ENCODE measurements at regions of chr19 and their contacts with region 1.

Region 1: DNA sequence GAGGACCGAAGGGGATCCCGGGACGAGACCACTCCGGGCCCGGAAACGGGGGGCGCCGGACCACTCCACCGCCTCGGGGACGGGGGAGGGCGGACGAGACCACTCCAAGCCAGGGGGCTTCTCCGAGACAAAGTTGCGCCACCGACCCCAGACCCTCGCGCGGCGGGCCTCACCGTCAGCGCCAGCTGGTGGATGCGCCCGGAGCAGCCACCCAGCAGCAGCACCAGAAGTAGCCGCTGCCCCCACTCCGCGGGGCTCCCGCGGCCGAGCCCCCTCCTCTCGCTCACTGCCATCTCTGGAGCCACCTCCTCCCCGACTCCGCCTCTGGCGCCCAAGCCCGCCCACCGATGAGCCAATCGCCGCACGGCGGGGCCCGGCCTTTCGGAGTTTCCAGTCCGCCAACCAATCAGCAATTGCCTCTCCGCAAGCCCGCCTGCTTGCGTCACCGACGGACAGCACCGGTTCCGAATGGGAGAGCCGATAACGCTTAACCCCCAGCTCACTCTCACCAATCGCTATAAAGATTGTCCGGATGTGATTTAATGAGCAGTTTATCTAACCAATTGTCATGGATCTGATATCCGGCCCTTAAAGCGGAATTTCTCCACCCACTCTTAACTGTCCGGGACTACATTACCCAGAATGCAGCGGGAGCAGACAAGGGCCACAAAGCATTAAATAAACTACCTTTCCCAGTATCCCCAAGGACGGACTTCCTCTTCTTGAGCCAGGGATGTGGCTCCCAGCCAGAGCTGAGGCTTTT is at the start of gene GPR108:
- DNase-seq: peak; percentile 99 to 100 (median 99)
- H3K4me3 ChIP-seq: peak within 1 kb of the TSS; percentile 80
- H3K4me3 Mint-ChIP-seq: peak within 1 kb of the TSS; percentile 92 to 99 (median 96)
- H3K27ac ChIP-seq: peak within 1 kb of the TSS; percentile 77
- H3K27ac Mint-ChIP-seq: peak within 1 kb of the TSS; percentile 95 to 100 (median 98)
- H3K4me1 ChIP-seq: peaks cover 47% of the 10 kb centered on the region
- H3K4me1 Mint-ChIP-seq: peaks cover 32 to 53% (median 36%) of the 10 kb centered on the region in 3 donors
- H3K27me3 ChIP-seq: no peaks in the 10 kb centered on the region
- H3K27me3 Mint-ChIP-seq: no peaks in the 10 kb centered on the region
- total RNA-seq, gene GPR108: 72.0 to 74.0 TPM

Region 2: DNA sequence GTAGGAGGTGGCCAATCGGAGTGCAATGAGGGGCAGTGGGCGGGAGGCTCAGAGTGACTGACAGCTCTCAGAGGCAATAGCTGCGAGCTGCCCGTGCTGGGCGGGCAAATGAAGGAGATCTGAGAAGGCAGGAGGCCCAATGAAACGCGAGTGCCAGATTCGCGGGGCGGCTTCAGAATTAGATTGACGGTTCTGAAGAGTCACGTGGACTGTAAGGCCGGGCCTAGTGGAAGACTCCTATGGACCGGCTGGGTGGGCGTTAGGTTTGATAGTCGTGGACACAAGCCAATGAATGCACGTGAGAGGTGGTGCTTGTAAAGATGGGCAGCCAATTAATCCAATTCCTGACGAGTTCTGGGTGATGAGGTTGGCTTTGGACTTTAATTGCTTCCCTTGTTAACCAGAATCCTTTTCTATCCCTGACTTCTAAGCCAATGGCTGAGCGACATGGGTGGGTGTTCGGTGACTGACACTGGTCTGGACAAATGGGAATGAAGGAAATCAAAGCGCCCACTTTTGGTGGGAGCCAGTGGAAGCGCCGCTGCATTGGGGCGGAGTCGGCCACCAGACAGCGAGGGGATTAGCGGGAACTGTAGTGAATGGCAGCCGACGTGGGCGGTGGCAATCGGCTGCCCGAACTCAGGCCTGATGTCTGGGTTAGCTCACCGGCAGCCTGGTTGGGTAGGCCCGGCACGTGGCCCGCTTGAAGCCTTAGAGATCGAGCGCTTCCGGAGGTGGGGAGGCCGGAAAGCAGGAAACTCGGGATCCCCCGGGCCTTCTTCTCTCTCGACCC is 312.3 kb before region 1 on chr19:
- CTCF ChIA-PET with region 1: no interaction called
- POLR2A ChIA-PET with region 1: interaction called, 11 read pairs
- DNase-seq: peak; percentile 97 to 100 (median 99)
- H3K4me3 ChIP-seq: peak overlapping the region; percentile 26
- H3K4me3 Mint-ChIP-seq: peak overlapping the region; percentile 73 to 95 (median 82)
- H3K27ac ChIP-seq: peak overlapping the region; percentile 53
- H3K27ac Mint-ChIP-seq: peak overlapping the region; percentile 74 to 98 (median 90)
- H3K4me1 ChIP-seq: peaks cover 27% of the 10 kb centered on the region
- H3K4me1 Mint-ChIP-seq: peaks cover 30 to 46% (median 33%) of the 10 kb centered on the region in 3 donors
- H3K27me3 ChIP-seq: no peaks in the 10 kb centered on the region
- H3K27me3 Mint-ChIP-seq: peaks cover 0 to 1% of the 10 kb centered on the region in 2 donors

Region 3: DNA sequence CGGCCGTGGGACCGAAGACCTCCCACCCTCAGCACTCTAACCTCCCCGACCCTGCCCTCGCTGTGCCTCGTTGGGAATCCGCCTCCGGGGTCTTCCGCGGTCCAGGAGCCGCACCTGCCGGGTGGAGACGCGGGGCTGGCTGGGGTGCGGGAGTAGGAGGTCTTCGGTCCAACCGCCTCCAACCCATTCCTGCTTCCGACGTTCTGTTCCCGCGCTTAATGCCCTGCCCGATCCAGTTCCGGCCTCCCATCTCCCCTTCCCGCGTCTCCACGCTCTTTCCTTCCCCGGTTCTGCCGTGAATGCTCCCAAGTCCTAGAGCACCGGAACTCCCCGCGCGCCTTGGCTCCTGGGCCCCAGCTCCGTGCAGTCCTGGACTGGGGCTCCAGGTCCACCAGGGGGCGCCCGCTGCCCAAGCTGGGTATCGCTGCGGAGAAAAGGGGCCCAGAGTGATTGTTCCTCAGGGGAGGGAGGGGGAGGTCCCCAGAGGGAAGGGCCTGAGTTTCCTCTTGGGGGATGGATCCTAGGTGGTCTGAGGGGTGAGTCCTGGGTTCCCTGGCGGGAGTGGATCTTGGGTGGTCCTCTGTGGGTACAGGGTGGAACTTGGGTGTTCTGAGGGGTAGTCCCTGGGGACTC is 220.7 kb before region 1 on chr19:
- CTCF ChIA-PET with region 1: interaction called, 12 read pairs
- POLR2A ChIA-PET with region 1: no interaction called
- DNase-seq: peak; percentile 81 to 93 (median 88)
- H3K4me3 ChIP-seq: peak overlapping the region; percentile 84
- H3K4me3 Mint-ChIP-seq: peak overlapping the region; percentile 92 to 98 (median 94)
- H3K27ac ChIP-seq: peak overlapping the region; percentile 70
- H3K27ac Mint-ChIP-seq: peak overlapping the region; percentile 13 to 96 (median 92)
- H3K4me1 ChIP-seq: peaks cover 16% of the 10 kb centered on the region
- H3K4me1 Mint-ChIP-seq: peaks cover 32 to 38% (median 33%) of the 10 kb centered on the region in 3 donors
- H3K27me3 ChIP-seq: no peaks in the 10 kb centered on the region
- H3K27me3 Mint-ChIP-seq: no peaks in the 10 kb centered on the region

Region 4: DNA sequence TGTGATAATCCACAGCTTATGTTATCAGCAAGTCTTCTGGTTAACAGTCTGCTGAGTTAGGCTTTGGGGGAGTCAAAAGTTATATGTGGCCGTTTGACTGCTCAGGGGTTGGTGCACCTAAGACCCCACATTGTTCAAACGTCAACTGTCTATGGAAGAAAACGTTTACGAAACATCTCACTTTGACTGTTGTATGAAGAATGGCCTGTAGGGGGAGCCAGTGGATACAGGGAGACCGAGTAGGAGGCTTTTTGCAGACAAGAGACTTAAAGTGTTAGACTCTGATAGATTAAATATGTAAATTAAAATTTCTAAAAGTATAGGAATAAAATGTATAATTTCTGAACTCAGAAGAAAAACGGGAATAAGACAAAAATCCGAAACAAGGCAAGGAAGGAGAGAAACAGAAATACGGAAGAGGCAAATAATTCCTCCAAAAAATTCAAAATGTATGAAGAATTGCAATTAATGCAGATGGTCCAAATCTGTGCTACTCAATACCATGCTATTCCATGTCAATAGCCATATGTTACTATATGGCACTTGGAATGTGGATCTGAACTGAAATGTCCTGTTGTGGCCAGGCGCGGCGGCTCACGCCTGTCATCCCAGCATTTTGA is 105.4 kb before region 1 on chr19:
- CTCF ChIA-PET with region 1: interaction called, 23 read pairs
- POLR2A ChIA-PET with region 1: no interaction called
- DNase-seq: peak; percentile 71 to 85 (median 77)
- H3K4me3 ChIP-seq: no peak overlapping the region
- H3K4me3 Mint-ChIP-seq: peak overlapping the region in 1 of 7 donors; percentile 3
- H3K27ac ChIP-seq: no peak overlapping the region
- H3K27ac Mint-ChIP-seq: peak overlapping the region in 4 of 8 donors; percentile 47 to 76 (median 71)
- H3K4me1 ChIP-seq: no peaks in the 10 kb centered on the region
- H3K4me1 Mint-ChIP-seq: peaks cover 14 to 17% (median 15%) of the 10 kb centered on the region in 3 donors
- H3K27me3 ChIP-seq: no peaks in the 10 kb centered on the region
- H3K27me3 Mint-ChIP-seq: peaks cover 4 to 5% of the 10 kb centered on the region in 2 donors

Region 5: GRCh38 chr19:6761053-6761676 is 23.7 kb after region 1 on chr19:
- CTCF ChIA-PET with region 1: no interaction called
- POLR2A ChIA-PET with region 1: no interaction called
- DNase-seq: no peak
- H3K4me3 ChIP-seq: no peak overlapping the region
- H3K4me3 Mint-ChIP-seq: no peak overlapping the region
- H3K27ac ChIP-seq: no peak overlapping the region
- H3K27ac Mint-ChIP-seq: peak overlapping the region in 2 of 8 donors; percentile 17 to 65
- H3K4me1 ChIP-seq: peaks cover 22% of the 10 kb centered on the region
- H3K4me1 Mint-ChIP-seq: peaks cover 13 to 27% (median 17%) of the 10 kb centered on the region in 3 donors
- H3K27me3 ChIP-seq: no peaks in the 10 kb centered on the region
- H3K27me3 Mint-ChIP-seq: no peaks in the 10 kb centered on the region

Region 6: GRCh38 chr19:6772028-6772865 is 34.8 kb after region 1 on chr19 and contains the start of gene VAV1:
- CTCF ChIA-PET with region 1: interaction called, 21 read pairs
- POLR2A ChIA-PET with region 1: interaction called, 4 read pairs
- DNase-seq: peak; percentile 74 to 88 (median 75)
- H3K4me3 ChIP-seq: peak within 1 kb of the TSS; percentile 98
- H3K4me3 Mint-ChIP-seq: peak within 1 kb of the TSS; percentile 85 to 97 (median 92)
- H3K27ac ChIP-seq: peak within 1 kb of the TSS; percentile 93
- H3K27ac Mint-ChIP-seq: peak within 1 kb of the TSS; percentile 89 to 99 (median 98)
- H3K4me1 ChIP-seq: peaks cover 38% of the 10 kb centered on the region
- H3K4me1 Mint-ChIP-seq: peaks cover 45 to 56% (median 55%) of the 10 kb centered on the region in 3 donors
- H3K27me3 ChIP-seq: no peaks in the 10 kb centered on the region
- H3K27me3 Mint-ChIP-seq: no peaks in the 10 kb centered on the region
- total RNA-seq, gene VAV1: 51.9 to 52.9 TPM

Region 7: GRCh38 chr19:6801485-6802086 is 64.1 kb after region 1 on chr19:
- CTCF ChIA-PET with region 1: interaction called, 22 read pairs
- POLR2A ChIA-PET with region 1: interaction called, 14 read pairs
- DNase-seq: peak; percentile 71 to 91 (median 84)
- H3K4me3 ChIP-seq: peak overlapping the region; percentile 68
- H3K4me3 Mint-ChIP-seq: peak overlapping the region; percentile 84 to 93 (median 89)
- H3K27ac ChIP-seq: peak overlapping the region; percentile 68
- H3K27ac Mint-ChIP-seq: peak overlapping the region; percentile 94 to 99 (median 97)
- H3K4me1 ChIP-seq: peaks cover 50% of the 10 kb centered on the region
- H3K4me1 Mint-ChIP-seq: peaks cover 49 to 67% (median 63%) of the 10 kb centered on the region in 3 donors
- H3K27me3 ChIP-seq: no peaks in the 10 kb centered on the region
- H3K27me3 Mint-ChIP-seq: no peaks in the 10 kb centered on the region

Measured in CD8-positive, alpha-beta memory T cell (primary cell).